ENCODE measurements at regions of chr5 and their contacts with region 1.

Region 1: DNA sequence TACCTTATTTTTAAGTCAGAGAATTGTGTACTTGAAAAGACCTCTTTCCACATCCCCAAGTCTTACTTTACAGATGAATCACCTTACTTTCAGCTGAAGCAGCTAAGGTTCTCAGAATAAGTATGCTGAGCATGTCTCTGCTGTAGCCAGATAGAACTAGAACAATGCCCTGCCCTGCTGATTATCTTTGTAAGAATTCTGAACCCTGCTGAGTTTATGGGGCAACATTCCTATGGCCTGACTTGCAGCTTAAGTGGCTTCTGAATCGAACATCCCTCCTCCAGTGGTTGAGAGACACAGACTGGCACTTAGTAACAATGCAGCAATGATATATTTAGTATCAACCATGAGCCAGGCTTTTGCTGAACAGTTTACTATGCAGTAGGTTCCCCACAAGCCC is 592.0 kb upstream of the WWC1 start:
- DNase-seq: peak; percentile 99
- H3K4me3 ChIP-seq: no peak overlapping the region
- H3K27me3 ChIP-seq: no peaks in the 10 kb centered on the region
- CTCF ChIP-seq: no peak

Region 2: DNA sequence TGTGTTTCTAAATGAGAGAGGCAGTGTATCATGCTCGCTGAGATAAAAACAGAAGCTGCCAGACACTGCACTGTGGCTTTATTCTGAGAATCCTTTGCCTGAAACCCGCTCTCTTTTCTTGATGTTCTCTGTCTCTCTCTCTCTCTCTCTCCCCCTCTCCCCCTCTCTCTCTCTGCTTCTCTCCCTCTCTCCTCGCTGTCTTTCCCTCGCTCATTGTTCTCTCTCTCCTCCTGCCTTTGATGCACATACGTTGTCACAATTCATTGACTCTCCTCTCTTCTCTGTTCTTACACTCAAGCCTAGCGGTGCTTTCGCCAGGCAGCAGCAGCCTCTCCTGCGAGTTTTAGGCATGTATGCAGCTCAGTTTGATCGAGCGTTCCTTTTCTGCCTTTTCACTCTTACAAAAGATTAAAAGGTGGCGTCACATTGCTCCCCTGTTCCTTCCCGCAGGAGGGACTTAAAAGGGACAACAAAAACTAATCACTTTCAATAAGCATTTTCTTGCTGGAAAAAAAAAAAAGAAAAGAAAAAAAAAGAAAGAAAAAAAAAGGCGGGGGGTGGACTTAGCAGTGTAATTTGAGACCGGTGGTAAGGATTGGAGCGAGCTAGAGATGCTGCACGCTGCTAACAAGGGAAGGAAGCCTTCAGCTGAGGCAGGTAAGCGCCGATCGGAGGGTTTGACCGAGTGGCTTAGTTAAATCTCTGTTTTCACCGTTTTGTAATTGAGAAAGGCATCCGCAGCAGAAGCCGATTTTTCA is 125.9 kb before region 1 on chr5:
- CTCF ChIA-PET with region 1: no interaction called
- POLR2A ChIA-PET with region 1: interaction called, 24 read pairs
- DNase-seq: no peak
- H3K4me3 ChIP-seq: peak overlapping the region; percentile 38
- H3K27me3 ChIP-seq: peaks cover 12% of the 10 kb centered on the region
- CTCF ChIP-seq: 0 out of 2 replicates have a peak, but pooled peaks have one; percentile 10

Region 3: DNA sequence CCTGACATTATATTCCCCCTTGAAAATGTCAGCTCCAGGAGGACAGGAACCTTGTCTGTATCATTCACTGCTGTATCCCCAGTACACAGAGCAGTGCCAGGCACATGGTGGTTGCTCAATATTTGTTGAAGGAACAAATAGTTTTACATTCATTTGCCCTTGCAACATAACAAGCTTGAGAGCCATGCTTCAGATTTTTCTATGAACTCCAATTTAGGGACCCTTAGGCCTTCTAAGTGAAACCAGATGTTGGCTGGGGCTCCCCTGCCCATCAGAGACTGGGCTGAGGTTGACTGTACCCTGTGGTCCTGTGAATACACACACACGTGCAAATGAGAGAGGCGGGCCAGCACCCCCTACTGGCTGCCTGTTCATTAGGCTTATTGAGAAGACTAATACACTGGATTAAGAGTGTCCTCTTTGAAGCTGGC is 377.1 kb after region 1 on chr5:
- CTCF ChIA-PET with region 1: no interaction called
- POLR2A ChIA-PET with region 1: interaction called, 16 read pairs
- DNase-seq: no peak
- H3K4me3 ChIP-seq: no peak overlapping the region
- H3K27me3 ChIP-seq: no peaks in the 10 kb centered on the region; the same call in 1 of the 2 replicates
- CTCF ChIP-seq: peak; percentile 73